IMR-90 (cell line): ENCODE measurements at regions of chr12 and their contacts with region 1.

Region 1: GRCh38 chr12:27523642-27524493 is at the start of gene PPFIBP1:
- DNase-seq: peak; percentile 97
- ATAC-seq: peak; percentile 98
- H3K4me3 ChIP-seq: peak within 1 kb of the TSS; percentile 84
- H3K27ac ChIP-seq: peak within 1 kb of the TSS; percentile 91
- H3K4me1 ChIP-seq: peaks cover 10% of the 10 kb centered on the region
- H3K27me3 ChIP-seq: no peaks in the 10 kb centered on the region
- CTCF ChIP-seq: peak; percentile 24; the same call in 1 of the 2 replicates
- POLR2A ChIP-seq: peak; percentile 90
- RAD21 ChIP-seq: peak; percentile 35
- total RNA-seq, gene PPFIBP1: 72.2 and 78.6 TPM in 2 replicates

Region 2: GRCh38 chr12:27343255-27344000 is 180.4 kb before region 1 on chr12:
- CTCF ChIA-PET with region 1: no interaction called
- POLR2A ChIA-PET with region 1: no interaction called
- dilution Hi-C with region 1: no loop called
- in situ Hi-C with region 1: no loop called
- intact Hi-C with region 1: loop called (anchors 5 kb)
- DNase-seq: peak; percentile 97
- ATAC-seq: peak; percentile 95
- H3K4me3 ChIP-seq: no peak overlapping the region; the same call in 1 of the 2 replicates
- H3K27ac ChIP-seq: peak overlapping the region; percentile 75
- H3K4me1 ChIP-seq: peaks cover 17% of the 10 kb centered on the region
- H3K27me3 ChIP-seq: no peaks in the 10 kb centered on the region
- CTCF ChIP-seq: no peak
- POLR2A ChIP-seq: no peak
- RAD21 ChIP-seq: 0 out of 2 replicates have a peak, but pooled peaks have one; percentile 1

Region 3: GRCh38 chr12:27434673-27435565 is 88.9 kb before region 1 on chr12:
- CTCF ChIA-PET with region 1: interaction called, 9 read pairs
- POLR2A ChIA-PET with region 1: no interaction called
- dilution Hi-C with region 1: no loop called
- in situ Hi-C with region 1: loop called (anchors 5 kb)
- intact Hi-C with region 1: loop called (anchors 1 kb)
- DNase-seq: no peak
- ATAC-seq: peak; percentile 50; the same call in 1 of the 2 replicates
- H3K4me3 ChIP-seq: no peak overlapping the region
- H3K27ac ChIP-seq: no peak overlapping the region
- H3K4me1 ChIP-seq: peaks cover 6% of the 10 kb centered on the region
- H3K27me3 ChIP-seq: no peaks in the 10 kb centered on the region
- CTCF ChIP-seq: peak; percentile 49
- POLR2A ChIP-seq: no peak
- RAD21 ChIP-seq: peak; percentile 35

Region 4: GRCh38 chr12:27542628-27543027 is 18.8 kb after region 1 on chr12:
- CTCF ChIA-PET with region 1: no interaction called
- POLR2A ChIA-PET with region 1: interaction called, 3 read pairs
- dilution Hi-C with region 1: no loop called
- in situ Hi-C with region 1: no loop called
- intact Hi-C with region 1: loop called (anchors 2 kb)
- DNase-seq: peak; percentile 97
- ATAC-seq: peak; percentile 96
- H3K4me3 ChIP-seq: no peak overlapping the region
- H3K27ac ChIP-seq: peak overlapping the region; percentile 8; the same call in 1 of the 2 replicates
- H3K4me1 ChIP-seq: peaks cover 18% of the 10 kb centered on the region
- H3K27me3 ChIP-seq: no peaks in the 10 kb centered on the region
- CTCF ChIP-seq: no peak
- POLR2A ChIP-seq: no peak
- RAD21 ChIP-seq: no peak

Region 5: GRCh38 chr12:27635349-27635972 is 111.6 kb after region 1 on chr12:
- CTCF ChIA-PET with region 1: no interaction called
- POLR2A ChIA-PET with region 1: no interaction called
- dilution Hi-C with region 1: no loop called
- in situ Hi-C with region 1: no loop called
- intact Hi-C with region 1: loop called (anchors 1 kb)
- DNase-seq: peak; percentile 77
- ATAC-seq: peak; percentile 49
- H3K4me3 ChIP-seq: no peak overlapping the region
- H3K27ac ChIP-seq: no peak overlapping the region
- H3K4me1 ChIP-seq: peaks cover 5% of the 10 kb centered on the region
- H3K27me3 ChIP-seq: no peaks in the 10 kb centered on the region
- CTCF ChIP-seq: peak; percentile 78
- POLR2A ChIP-seq: no peak
- RAD21 ChIP-seq: peak; percentile 90

Region 6: DNA sequence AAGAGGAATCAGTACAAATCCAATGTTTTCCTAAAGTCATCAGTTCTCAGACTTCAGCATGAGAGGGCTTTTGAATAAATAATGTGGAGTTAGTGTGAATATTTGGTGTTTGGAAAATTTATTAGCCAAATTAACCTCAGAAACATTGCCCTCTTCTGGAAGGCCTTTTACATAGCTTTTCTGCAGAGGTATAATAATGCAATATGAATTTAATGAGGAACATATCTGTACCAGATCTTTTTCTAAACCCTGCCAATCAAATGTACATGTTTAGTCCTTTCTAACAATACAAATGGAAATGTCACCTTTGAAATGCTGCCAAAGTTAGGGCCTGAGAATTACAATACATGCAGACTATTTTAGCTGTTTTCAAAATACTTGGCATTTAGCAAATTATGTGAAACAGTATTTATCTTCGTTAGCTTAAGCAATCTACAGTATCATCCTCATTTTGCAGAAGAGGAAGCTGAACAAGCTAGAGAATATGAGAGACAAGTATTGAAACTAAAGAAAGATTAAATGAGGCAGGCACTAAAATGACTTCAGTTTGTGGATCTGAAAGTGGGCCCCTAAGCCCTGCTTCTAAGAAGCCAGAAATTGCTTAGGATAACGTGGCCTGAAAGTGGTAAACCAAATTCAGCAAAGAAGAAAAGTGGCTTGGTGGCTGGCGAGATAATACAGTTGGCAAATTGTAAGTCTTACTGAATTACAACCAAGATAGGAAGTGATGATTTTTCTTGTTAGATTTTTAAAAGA is 316.6 kb after region 1 on chr12:
- CTCF ChIA-PET with region 1: no interaction called
- POLR2A ChIA-PET with region 1: no interaction called
- dilution Hi-C with region 1: no loop called
- in situ Hi-C with region 1: no loop called
- intact Hi-C with region 1: no loop called
- DNase-seq: no peak
- ATAC-seq: 0 out of 2 replicates have a peak, but pooled peaks have one; percentile 30
- H3K4me3 ChIP-seq: no peak overlapping the region
- H3K27ac ChIP-seq: no peak overlapping the region
- H3K4me1 ChIP-seq: peaks cover 6% of the 10 kb centered on the region; the same call in 1 of the 2 replicates
- H3K27me3 ChIP-seq: no peaks in the 10 kb centered on the region
- CTCF ChIP-seq: peak; percentile 58
- POLR2A ChIP-seq: no peak
- RAD21 ChIP-seq: peak; percentile 33; the same call in 1 of the 2 replicates